Dorsolateral prefrontal cortex (tissue), 120 donors: ENCODE measurements at regions of chr1 and their contacts with region 1.

Region 1: DNA sequence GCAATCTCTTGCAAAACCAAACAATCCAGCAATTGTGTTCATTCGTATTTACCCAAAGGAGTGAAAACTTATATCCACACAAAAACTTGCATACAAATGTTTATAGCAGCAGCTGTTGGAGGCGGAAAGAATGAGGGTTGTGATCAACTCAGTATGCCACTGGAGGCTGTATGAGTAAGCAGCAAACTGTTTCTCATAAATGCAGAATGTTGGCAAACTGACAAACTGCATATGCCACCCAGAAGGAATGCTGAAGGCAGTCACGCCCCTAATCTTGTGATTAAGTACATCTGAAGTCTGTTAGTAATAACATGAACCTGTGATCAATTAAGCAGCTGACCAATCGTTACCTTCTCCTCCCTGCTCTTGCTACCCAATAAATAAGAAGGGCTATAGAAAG is 60.5 kb upstream of the CR2 start:
- DNase-seq: no peak
- H3K4me3 ChIP-seq: no peak overlapping the region
- H3K27ac ChIP-seq: no peak overlapping the region
- H3K27me3 ChIP-seq: no peaks in the 10 kb centered on the region
- CTCF ChIP-seq: no peak

Region 2: GRCh38 chr1:207321079-207321789 is 72.4 kb before region 1 on chr1 and contains the start of gene CD55:
- intact Hi-C with region 1: loop called (anchors 2 to 5 kb)
- DNase-seq: peak; percentile 73 to 93 (median 88)
- H3K4me3 ChIP-seq: peak within 1 kb of the TSS; percentile 57 to 98 (median 88)
- H3K27ac ChIP-seq: peak within 1 kb of the TSS; percentile 35 to 98 (median 92)
- H3K27me3 ChIP-seq: no peaks in the 10 kb centered on the region
- CTCF ChIP-seq: peak in 27 of 56 donors; percentile 6 to 50 (median 17)
- total RNA-seq, gene CD55: 11.7 to 83.5 (median 35.7) TPM

Region 3: GRCh38 chr1:207328004-207328403 is 65.6 kb before region 1 on chr1:
- intact Hi-C with region 1: loop called (anchors 2 to 5 kb)
- DNase-seq: no peak
- H3K4me3 ChIP-seq: no peak overlapping the region
- H3K27ac ChIP-seq: peak overlapping the region in 2 of 59 donors; percentile 9 to 35
- H3K27me3 ChIP-seq: no peaks in the 10 kb centered on the region
- CTCF ChIP-seq: no peak